Naive thymus-derived CD4-positive, alpha-beta T cell (primary cell): ENCODE measurements at regions of chr11 and their contacts with region 1.

Region 1: DNA sequence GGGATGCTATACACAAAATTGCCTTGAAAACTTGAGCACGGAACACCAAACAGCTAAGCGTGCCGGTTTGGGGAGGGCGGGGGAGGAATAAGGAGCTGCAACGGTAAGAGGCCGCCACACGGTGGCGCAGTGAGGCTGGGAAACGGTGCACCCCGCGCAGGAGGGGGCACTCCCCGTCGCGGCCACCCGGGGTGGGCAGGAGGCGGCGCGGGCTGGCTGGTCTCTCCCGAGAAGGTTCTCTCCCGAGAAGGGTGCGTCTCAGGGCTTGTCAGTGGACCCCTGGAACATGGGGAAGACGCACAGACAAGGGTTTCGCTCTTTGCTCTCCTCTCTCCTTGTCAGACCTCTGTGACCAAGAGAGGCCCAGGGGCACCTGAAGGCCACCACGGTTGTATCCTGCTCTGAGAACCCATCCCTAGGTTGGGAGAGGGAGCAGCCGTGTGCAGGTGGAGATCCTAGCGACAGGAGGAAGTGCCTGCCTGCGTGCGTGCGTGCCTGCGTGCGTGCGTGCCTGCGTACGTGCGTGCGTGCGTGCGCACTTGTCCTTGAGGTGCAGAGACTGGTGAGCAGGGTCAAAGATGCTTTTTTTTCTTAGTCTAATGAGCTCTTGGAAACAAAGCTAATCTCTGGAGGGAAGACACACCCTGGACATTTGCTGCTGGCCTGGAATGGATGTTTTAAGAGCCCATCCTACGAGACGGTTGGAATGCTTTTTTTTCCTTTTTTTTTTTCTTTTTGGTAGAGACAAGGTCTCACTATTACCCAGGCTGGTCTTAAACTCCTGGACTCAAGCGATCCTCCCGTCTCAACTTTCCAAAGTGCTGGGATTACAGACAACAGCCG is 18.1 kb upstream of the JAM3 start:
- DNase-seq: peak; percentile 60 to 82 (median 71)
- ATAC-seq: peak; percentile 96
- H3K4me3 ChIP-seq: no peak overlapping the region
- H3K4me3 Mint-ChIP-seq: peak overlapping the region in 5 of 10 donors; percentile 13 to 51 (median 48)
- H3K27ac ChIP-seq: no peak overlapping the region
- H3K27ac Mint-ChIP-seq: peak overlapping the region in 3 of 9 donors; percentile 44 to 86 (median 70)
- H3K4me1 ChIP-seq: peaks cover 4% of the 10 kb centered on the region in 2 donors
- H3K4me1 Mint-ChIP-seq: peaks cover 0 to 14% (median 5%) of the 10 kb centered on the region in 7 donors
- H3K27me3 ChIP-seq: peaks cover 0 to 3% of the 10 kb centered on the region in 2 donors
- H3K27me3 Mint-ChIP-seq: peaks cover 14 to 26% (median 21%) of the 10 kb centered on the region in 5 donors

Region 2: DNA sequence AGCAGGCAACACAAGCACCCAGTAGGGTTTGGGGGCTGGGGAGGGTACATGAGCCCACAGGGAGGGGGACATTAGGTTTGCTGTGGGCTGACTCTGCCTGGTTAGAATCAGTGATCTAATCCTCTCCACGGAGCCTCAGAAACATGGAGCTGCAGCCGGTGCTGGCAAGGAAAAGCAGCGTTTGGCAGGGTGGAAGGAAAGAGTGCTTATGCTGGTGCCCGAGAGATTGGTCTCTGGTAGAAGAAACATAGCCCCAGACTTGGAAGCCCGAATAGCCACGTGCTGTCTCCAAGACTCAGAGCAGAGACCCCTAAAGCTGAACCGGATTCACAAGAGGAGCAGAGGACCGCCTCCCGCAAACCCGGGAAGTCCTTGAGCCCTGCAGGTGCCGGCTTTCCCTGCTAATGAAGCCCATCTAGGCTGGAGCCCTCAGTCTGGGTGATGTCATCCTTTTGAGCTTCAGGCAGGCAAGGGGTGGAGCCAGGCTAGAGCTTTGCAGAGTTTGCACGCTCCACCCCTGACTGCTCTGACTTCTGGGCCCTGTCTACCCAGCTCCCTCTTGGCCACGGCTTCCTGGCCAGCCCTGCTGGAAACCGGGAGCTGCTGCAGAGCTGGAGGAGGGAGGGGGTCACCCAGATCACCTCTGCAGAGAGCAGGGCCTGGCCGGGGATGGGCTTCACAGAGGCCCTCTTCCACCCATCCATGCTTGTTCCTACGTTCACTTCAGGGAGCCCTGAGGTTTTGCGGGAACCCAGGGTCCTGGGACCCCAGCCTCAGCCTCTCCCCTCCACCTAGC is 16.9 kb before region 1 on chr11:
- CTCF ChIA-PET with region 1: interaction called, 9 read pairs
- POLR2A ChIA-PET with region 1: interaction called, 5 read pairs
- intact Hi-C with region 1: loop called in 1 of 2 experiments (anchors 1 kb)
- DNase-seq: peak in 8 of 9 donors; percentile 38 to 74 (median 60)
- ATAC-seq: peak; percentile 77
- H3K4me3 ChIP-seq: peak overlapping the region; percentile 25
- H3K4me3 Mint-ChIP-seq: peak overlapping the region; percentile 63 to 95 (median 75)
- H3K27ac ChIP-seq: peak overlapping the region; percentile 67
- H3K27ac Mint-ChIP-seq: peak overlapping the region; percentile 74 to 98 (median 85)
- H3K4me1 ChIP-seq: peaks cover 29 to 46% of the 10 kb centered on the region in 2 donors
- H3K4me1 Mint-ChIP-seq: peaks cover 33 to 79% (median 65%) of the 10 kb centered on the region in 7 donors
- H3K27me3 ChIP-seq: no peaks in the 10 kb centered on the region
- H3K27me3 Mint-ChIP-seq: peaks cover 0 to 24% (median 0%) of the 10 kb centered on the region in 5 donors

Region 3: DNA sequence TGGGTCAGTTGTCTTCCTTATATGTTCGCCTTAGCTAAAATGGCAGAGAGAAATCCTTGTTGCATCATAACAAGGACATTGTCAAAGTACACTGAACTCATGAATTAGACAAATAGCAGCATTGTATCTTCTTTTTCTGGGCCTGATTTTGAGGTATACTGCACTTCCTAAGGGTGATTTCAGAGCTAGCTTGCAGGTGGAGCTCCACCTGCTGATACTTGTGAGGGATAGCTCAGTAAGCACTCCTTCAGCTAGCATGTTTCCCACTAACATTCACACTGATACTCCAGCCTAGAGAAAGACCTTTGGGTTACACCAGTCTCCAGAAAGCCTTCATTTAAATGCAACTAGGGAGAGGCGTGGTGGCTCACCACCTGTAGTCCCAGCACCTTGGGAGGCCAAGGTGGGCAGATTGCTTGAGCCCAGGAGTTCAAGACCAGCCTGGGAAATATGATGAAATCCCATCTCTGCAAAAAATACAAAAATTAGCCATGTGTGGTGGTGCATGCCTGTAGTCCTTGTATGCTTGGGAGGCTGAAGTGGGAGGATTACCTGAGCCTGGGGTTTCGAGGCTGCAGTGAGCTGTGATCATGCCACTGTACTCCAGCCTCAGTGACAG is 47.9 kb after region 1 on chr11:
- CTCF ChIA-PET with region 1: interaction called, 16 read pairs
- POLR2A ChIA-PET with region 1: no interaction called
- intact Hi-C with region 1: loop called (anchors 1 kb)
- DNase-seq: peak in 4 of 9 donors; percentile 4 to 15 (median 8)
- ATAC-seq: no peak
- H3K4me3 ChIP-seq: no peak overlapping the region
- H3K4me3 Mint-ChIP-seq: no peak overlapping the region
- H3K27ac ChIP-seq: no peak overlapping the region
- H3K27ac Mint-ChIP-seq: no peak overlapping the region
- H3K4me1 ChIP-seq: no peaks in the 10 kb centered on the region
- H3K4me1 Mint-ChIP-seq: peaks cover 0 to 8% (median 0%) of the 10 kb centered on the region in 7 donors
- H3K27me3 ChIP-seq: no peaks in the 10 kb centered on the region
- H3K27me3 Mint-ChIP-seq: peaks cover 0 to 11% (median 0%) of the 10 kb centered on the region in 5 donors

Region 4: GRCh38 chr11:134139873-134140331 is 89.1 kb after region 1 on chr11:
- CTCF ChIA-PET with region 1: interaction called, 16 read pairs
- POLR2A ChIA-PET with region 1: interaction called, 3 read pairs
- intact Hi-C with region 1: loop called (anchors 1 kb)
- DNase-seq: peak in 7 of 9 donors; percentile 15 to 55 (median 43)
- ATAC-seq: peak; percentile 72
- H3K4me3 ChIP-seq: no peak overlapping the region
- H3K4me3 Mint-ChIP-seq: no peak overlapping the region
- H3K27ac ChIP-seq: no peak overlapping the region
- H3K27ac Mint-ChIP-seq: no peak overlapping the region
- H3K4me1 ChIP-seq: no peaks in the 10 kb centered on the region
- H3K4me1 Mint-ChIP-seq: peaks cover 0 to 13% (median 3%) of the 10 kb centered on the region in 7 donors
- H3K27me3 ChIP-seq: no peaks in the 10 kb centered on the region
- H3K27me3 Mint-ChIP-seq: peaks cover 0 to under 1% (median 0%) of the 10 kb centered on the region in 5 donors

Region 5: GRCh38 chr11:134196756-134197155 is 146.0 kb after region 1 on chr11:
- CTCF ChIA-PET with region 1: no interaction called
- POLR2A ChIA-PET with region 1: no interaction called
- intact Hi-C with region 1: no loop called
- DNase-seq: no peak
- ATAC-seq: peak; percentile 47
- H3K4me3 ChIP-seq: no peak overlapping the region
- H3K4me3 Mint-ChIP-seq: no peak overlapping the region
- H3K27ac ChIP-seq: no peak overlapping the region
- H3K27ac Mint-ChIP-seq: peak overlapping the region in 4 of 9 donors; percentile 11 to 64 (median 34)
- H3K4me1 ChIP-seq: no peaks in the 10 kb centered on the region
- H3K4me1 Mint-ChIP-seq: peaks cover 0 to 9% (median 0%) of the 10 kb centered on the region in 7 donors
- H3K27me3 ChIP-seq: no peaks in the 10 kb centered on the region
- H3K27me3 Mint-ChIP-seq: no peaks in the 10 kb centered on the region